ENCODE measurements at regions of chr1 and their contacts with region 1.

Region 1: GRCh38 chr1:30085811-30086770 is 637.3 kb downstream of the MATN1 start:
- DNase-seq: peak in 4 of 5 donors; percentile 47 to 80 (median 56)
- ATAC-seq: peak in 3 of 4 donors; percentile 27 to 59 (median 47)
- H3K4me3 ChIP-seq: peak overlapping the region in 4 of 12 donors; percentile 5 to 39 (median 29)
- H3K27ac ChIP-seq: peak overlapping the region in 1 of 12 donors; percentile 4
- H3K4me1 ChIP-seq: peaks cover 4 to 42% (median 24%) of the 10 kb centered on the region in 12 donors
- H3K27me3 ChIP-seq: peaks cover 0 to 18% (median 0%) of the 10 kb centered on the region in 9 donors
- CTCF ChIP-seq: peak; percentile 31 to 76 (median 61)
- POLR2A ChIP-seq: no peak

Region 2: DNA sequence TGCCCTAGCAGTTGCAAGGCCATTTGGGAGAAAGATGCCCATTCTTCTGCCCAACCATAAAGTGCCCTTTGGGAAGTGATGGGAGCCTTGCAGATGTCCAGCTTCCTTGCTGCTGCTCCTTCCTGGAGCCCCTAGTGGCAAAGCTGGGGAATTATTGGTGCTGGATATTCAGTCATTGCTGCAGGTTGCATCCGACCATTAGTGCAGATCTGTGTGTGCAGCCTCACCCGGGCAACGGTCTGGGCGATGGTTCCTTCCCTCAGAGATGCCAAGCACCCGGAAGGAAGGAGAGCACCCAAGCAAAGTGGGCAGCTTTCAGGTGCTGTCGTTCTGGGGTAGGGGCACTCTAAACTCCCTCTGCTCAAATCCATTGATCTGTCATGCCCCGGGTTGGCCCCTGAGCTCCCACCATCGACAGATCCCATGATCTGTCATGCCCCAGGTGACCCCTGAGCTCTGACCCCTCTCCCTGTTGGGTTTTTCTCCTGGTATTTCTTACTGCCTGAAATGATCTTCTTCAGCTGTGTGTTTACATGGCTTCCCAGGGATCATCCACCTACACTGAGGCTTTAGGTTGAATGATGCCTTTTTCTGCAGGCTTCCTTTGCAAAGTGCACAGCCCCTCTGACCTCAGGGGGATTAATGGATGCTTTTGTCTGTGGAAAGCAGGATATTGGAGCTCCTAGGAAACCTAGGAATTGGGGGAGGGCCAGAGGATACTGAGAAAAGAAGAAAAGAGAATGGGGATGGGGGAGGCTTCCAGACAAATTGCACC is 382.3 kb before region 1 on chr1:
- intact Hi-C with region 1: loop called in 1 of 10 experiments (anchors 10 kb)
- DNase-seq: no peak
- ATAC-seq: peak in 2 of 4 donors; percentile 30 to 34
- H3K4me3 ChIP-seq: no peak overlapping the region
- H3K27ac ChIP-seq: no peak overlapping the region
- H3K4me1 ChIP-seq: peaks cover 0 to 9% (median 0%) of the 10 kb centered on the region in 12 donors
- H3K27me3 ChIP-seq: peaks cover 0 to 32% (median 25%) of the 10 kb centered on the region in 9 donors
- CTCF ChIP-seq: peak; percentile 34 to 65 (median 54)
- POLR2A ChIP-seq: no peak

Region 3: GRCh38 chr1:29798699-29799566 is 287.2 kb before region 1 on chr1:
- intact Hi-C with region 1: loop called in 8 of 10 experiments (anchors 5 to 10 kb)
- DNase-seq: no peak
- ATAC-seq: no peak
- H3K4me3 ChIP-seq: no peak overlapping the region
- H3K27ac ChIP-seq: no peak overlapping the region
- H3K4me1 ChIP-seq: peaks cover 0 to 2% (median 0%) of the 10 kb centered on the region in 12 donors
- H3K27me3 ChIP-seq: peaks cover 0 to 25% (median 4%) of the 10 kb centered on the region in 9 donors
- CTCF ChIP-seq: no peak
- POLR2A ChIP-seq: no peak

Region 4: GRCh38 chr1:29912425-29912824 is 173.7 kb before region 1 on chr1:
- intact Hi-C with region 1: loop called in 6 of 10 experiments (anchors 5 to 10 kb)
- DNase-seq: no peak
- ATAC-seq: no peak
- H3K4me3 ChIP-seq: no peak overlapping the region
- H3K27ac ChIP-seq: no peak overlapping the region
- H3K4me1 ChIP-seq: no peaks in the 10 kb centered on the region
- H3K27me3 ChIP-seq: peaks cover 0 to 4% (median 0%) of the 10 kb centered on the region in 9 donors
- CTCF ChIP-seq: peak in 6 of 12 donors; percentile 13 to 47 (median 29)
- POLR2A ChIP-seq: no peak

Region 5: DNA sequence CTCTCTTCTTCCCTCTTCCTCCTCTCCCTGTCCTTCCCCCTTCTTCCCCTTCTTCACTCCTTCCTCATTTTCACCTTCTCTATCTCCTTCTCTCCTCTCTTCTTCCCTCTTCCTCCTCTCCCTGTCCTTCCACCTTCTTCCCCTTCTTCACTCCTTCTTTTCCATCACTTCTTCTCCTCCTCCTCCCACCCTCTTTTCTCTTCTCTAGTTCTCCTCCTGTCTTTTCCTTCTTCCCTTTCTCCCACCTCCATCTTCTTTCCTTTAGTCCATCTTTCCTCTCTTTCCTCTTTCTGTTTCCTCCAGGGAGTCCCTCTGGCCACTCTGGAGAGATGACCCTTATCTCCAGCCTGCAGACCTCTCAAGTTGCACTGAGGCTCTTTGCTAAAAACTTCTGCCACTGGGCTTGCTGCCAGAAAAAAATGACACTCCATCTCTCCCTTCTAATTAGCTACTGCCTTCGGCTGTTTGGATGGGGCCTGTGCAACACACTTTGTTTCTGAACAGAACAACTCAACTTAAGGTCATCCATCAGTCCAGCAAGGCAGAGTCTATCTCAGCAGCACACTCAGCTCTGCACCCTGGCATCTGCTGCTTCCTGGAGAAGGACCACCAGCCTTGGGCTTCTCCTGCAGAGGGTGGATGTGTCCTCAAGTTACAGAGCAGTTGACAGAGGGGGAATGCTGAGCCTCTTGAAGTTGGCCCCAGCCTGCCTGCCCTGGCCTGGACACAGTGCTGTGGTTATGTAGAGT is 98.5 kb after region 1 on chr1:
- intact Hi-C with region 1: no loop called
- DNase-seq: no peak
- ATAC-seq: no peak
- H3K4me3 ChIP-seq: no peak overlapping the region
- H3K27ac ChIP-seq: no peak overlapping the region
- H3K4me1 ChIP-seq: no peaks in the 10 kb centered on the region
- H3K27me3 ChIP-seq: peaks cover 2 to 16% (median 9%) of the 10 kb centered on the region in 9 donors
- CTCF ChIP-seq: no peak
- POLR2A ChIP-seq: no peak

Region 6: GRCh38 chr1:30315185-30315960 is 229.3 kb after region 1 on chr1:
- intact Hi-C with region 1: no loop called
- DNase-seq: no peak
- ATAC-seq: no peak
- H3K4me3 ChIP-seq: no peak overlapping the region
- H3K27ac ChIP-seq: no peak overlapping the region
- H3K4me1 ChIP-seq: no peaks in the 10 kb centered on the region
- H3K27me3 ChIP-seq: peaks cover 0 to 63% (median 6%) of the 10 kb centered on the region in 9 donors
- CTCF ChIP-seq: no peak
- POLR2A ChIP-seq: no peak